Breast epithelium (tissue), 4 donors: ENCODE measurements at regions of chr15 and their contacts with region 1.

Region 1: DNA sequence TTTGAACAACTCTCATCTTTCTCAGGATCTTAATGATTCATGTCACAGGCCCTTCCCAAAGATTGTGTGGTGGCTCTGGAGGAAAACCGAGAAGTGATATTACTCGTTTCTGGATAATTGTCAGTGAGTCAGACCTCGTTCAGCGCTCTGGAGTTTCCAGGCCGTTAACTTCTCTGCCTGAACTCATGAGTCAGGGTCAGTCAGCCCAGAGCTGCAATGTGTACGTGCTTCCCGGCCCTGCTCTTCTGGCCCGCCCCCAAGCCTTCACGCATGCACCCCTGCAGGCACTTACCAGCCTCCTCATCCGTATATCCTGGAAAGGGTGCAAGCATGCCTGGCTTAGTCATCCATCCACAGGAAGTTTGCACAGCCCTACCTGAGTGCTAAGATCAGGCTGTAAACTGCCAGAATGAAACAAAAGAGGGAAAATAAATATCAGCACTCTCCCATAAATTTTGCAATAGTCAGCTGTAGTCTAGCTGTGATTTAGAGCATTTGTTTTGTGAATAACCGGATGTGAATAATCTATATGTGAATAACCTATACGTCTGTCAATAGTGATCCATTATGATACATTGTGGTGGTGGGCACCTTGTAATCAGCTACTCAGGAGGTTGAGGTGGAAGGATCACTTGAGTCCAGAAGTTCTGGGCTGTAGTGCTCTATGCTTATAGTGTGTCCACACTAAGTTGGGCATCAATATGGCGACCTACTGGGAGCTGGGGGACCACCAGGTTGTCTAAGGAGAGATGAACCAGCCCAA is 35.3 kb upstream of the SEMA4B start:
- DNase-seq: peak; percentile 69 to 89
- H3K4me3 ChIP-seq: no peak overlapping the region
- H3K27ac ChIP-seq: peak overlapping the region; percentile 64 to 83
- H3K4me1 ChIP-seq: no peaks in the 10 kb centered on the region
- H3K27me3 ChIP-seq: no peaks in the 10 kb centered on the region
- CTCF ChIP-seq: no peak
- POLR2A ChIP-seq: no peak

Region 2: GRCh38 chr15:90143166-90143655 is 22.6 kb before region 1 on chr15:
- intact Hi-C with region 1: loop called (anchors 1 kb)
- DNase-seq: peak; percentile 50 to 81
- H3K4me3 ChIP-seq: no peak overlapping the region
- H3K27ac ChIP-seq: peak overlapping the region in 1 of 2 donors; percentile 50
- H3K4me1 ChIP-seq: no peaks in the 10 kb centered on the region
- H3K27me3 ChIP-seq: no peaks in the 10 kb centered on the region
- CTCF ChIP-seq: peak; percentile 21 to 73 (median 58)
- POLR2A ChIP-seq: no peak

Region 3: GRCh38 chr15:90149609-90150340 is 16.1 kb before region 1 on chr15:
- intact Hi-C with region 1: loop called (anchors 2 kb)
- DNase-seq: no peak
- H3K4me3 ChIP-seq: no peak overlapping the region
- H3K27ac ChIP-seq: peak overlapping the region; percentile 9 to 73
- H3K4me1 ChIP-seq: no peaks in the 10 kb centered on the region
- H3K27me3 ChIP-seq: no peaks in the 10 kb centered on the region
- CTCF ChIP-seq: no peak
- POLR2A ChIP-seq: no peak

Region 4: GRCh38 chr15:90214553-90215196 is 48.8 kb after region 1 on chr15:
- intact Hi-C with region 1: loop called (anchors 5 kb)
- DNase-seq: no peak
- H3K4me3 ChIP-seq: no peak overlapping the region
- H3K27ac ChIP-seq: no peak overlapping the region
- H3K4me1 ChIP-seq: peaks cover 0 to 12% of the 10 kb centered on the region in 2 donors
- H3K27me3 ChIP-seq: no peaks in the 10 kb centered on the region
- CTCF ChIP-seq: peak in 1 of 3 donors; percentile 20
- POLR2A ChIP-seq: no peak

Region 5: GRCh38 chr15:90241343-90242192 is 75.7 kb after region 1 on chr15:
- intact Hi-C with region 1: no loop called
- DNase-seq: no peak
- H3K4me3 ChIP-seq: no peak overlapping the region
- H3K27ac ChIP-seq: no peak overlapping the region
- H3K4me1 ChIP-seq: no peaks in the 10 kb centered on the region
- H3K27me3 ChIP-seq: no peaks in the 10 kb centered on the region
- CTCF ChIP-seq: no peak
- POLR2A ChIP-seq: no peak